Panc1 (cell line): ENCODE measurements at regions of chr10 and their contacts with region 1.

Region 1: GRCh38 chr10:21724695-21725367 is 190.8 kb downstream of the MLLT10 start:
- DNase-seq: peak; percentile 28
- ATAC-seq: peak; percentile 79
- H3K4me3 ChIP-seq: no peak overlapping the region
- H3K27ac ChIP-seq: peak overlapping the region; percentile 64
- H3K4me1 ChIP-seq: peaks cover 73% of the 10 kb centered on the region
- H3K27me3 ChIP-seq: no peaks in the 10 kb centered on the region
- CTCF ChIP-seq: no peak

Region 2: GRCh38 chr10:21675157-21675796 is 49.6 kb before region 1 on chr10:
- CTCF ChIA-PET with region 1: interaction called, 11 read pairs
- POLR2A ChIA-PET with region 1: no interaction called
- in situ Hi-C with region 1: no loop called
- intact Hi-C with region 1: no loop called
- DNase-seq: peak; percentile 22
- ATAC-seq: peak; percentile 75; the same call in 1 of the 2 replicates
- H3K4me3 ChIP-seq: no peak overlapping the region
- H3K27ac ChIP-seq: no peak overlapping the region
- H3K4me1 ChIP-seq: peaks cover 7% of the 10 kb centered on the region
- H3K27me3 ChIP-seq: no peaks in the 10 kb centered on the region
- CTCF ChIP-seq: peak; percentile 70; the same call in 1 of the 2 replicates

Region 3: DNA sequence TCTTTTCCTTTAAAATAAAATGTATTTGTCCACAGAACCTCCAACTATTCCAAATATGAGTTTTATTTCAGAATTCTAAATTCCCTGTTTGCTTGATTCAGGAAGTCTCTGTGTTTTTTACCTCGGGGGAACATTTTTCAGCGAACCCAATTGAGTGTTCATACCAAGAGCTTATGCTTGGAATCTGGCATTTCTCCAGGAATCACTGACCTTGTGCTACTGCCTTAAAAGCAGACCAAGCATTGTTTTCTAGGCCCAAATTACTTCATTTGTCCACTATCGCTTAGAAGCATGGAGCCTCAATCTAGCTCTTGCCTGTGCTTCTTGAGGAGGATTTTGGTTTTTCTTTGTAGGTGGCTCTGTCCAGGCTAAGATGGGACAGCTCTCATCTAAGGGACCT is 433.6 kb after region 1 on chr10:
- CTCF ChIA-PET with region 1: no interaction called
- POLR2A ChIA-PET with region 1: no interaction called
- in situ Hi-C with region 1: no loop called
- intact Hi-C with region 1: no loop called
- DNase-seq: no peak
- ATAC-seq: no peak
- H3K4me3 ChIP-seq: no peak overlapping the region
- H3K27ac ChIP-seq: no peak overlapping the region
- H3K4me1 ChIP-seq: no peaks in the 10 kb centered on the region
- H3K27me3 ChIP-seq: no peaks in the 10 kb centered on the region
- CTCF ChIP-seq: no peak